Calu3 (cell line): ENCODE measurements at regions of chr5 and their contacts with region 1.

Region 1: DNA sequence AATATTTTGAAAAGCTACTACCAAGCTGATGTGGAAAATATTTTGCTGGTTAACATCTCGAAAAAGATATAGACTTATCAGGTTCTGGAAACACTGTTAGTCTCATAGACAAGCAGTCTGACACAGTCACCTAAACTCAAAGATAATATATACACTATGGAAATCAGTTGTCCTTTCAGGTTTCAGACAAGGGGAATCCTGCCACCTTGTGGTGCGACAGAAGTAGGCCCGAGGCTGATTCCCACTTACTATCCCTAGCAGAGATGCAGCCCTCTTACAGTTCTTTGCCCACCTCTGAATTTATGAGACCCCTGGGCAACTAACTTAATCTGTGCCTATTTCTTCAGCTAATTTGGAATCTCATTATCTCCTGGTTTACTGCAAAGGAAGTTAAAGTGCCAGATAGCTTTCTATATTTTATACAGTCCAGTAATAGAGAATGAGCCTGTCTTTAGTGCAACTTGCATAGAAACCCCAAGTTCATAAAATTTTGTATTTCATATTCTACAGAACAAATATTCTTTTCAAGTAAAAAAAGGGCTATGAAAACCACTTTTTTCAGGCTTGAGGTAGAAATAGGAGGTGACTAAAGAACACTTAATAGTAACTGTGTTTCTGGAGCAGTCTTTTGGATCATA is 16.9 kb downstream of the RAD1 start:
- DNase-seq: peak; percentile 65
- H3K4me3 Mint-ChIP-seq: no peak overlapping the region
- H3K27ac Mint-ChIP-seq: no peak overlapping the region
- H3K4me1 Mint-ChIP-seq: no peaks in the 10 kb centered on the region
- H3K27me3 Mint-ChIP-seq: no peaks in the 10 kb centered on the region
- CTCF ChIP-seq: peak; percentile 58

Region 2: GRCh38 chr5:34474573-34475021 is 423.8 kb before region 1 on chr5:
- CTCF ChIA-PET with region 1: interaction called, 7 read pairs
- intact Hi-C with region 1: loop called (anchors 1 kb)
- DNase-seq: peak; percentile 29
- H3K4me3 Mint-ChIP-seq: no peak overlapping the region
- H3K27ac Mint-ChIP-seq: no peak overlapping the region
- H3K4me1 Mint-ChIP-seq: peaks cover 12% of the 10 kb centered on the region
- H3K27me3 Mint-ChIP-seq: no peaks in the 10 kb centered on the region
- CTCF ChIP-seq: peak; percentile 68

Region 3: DNA sequence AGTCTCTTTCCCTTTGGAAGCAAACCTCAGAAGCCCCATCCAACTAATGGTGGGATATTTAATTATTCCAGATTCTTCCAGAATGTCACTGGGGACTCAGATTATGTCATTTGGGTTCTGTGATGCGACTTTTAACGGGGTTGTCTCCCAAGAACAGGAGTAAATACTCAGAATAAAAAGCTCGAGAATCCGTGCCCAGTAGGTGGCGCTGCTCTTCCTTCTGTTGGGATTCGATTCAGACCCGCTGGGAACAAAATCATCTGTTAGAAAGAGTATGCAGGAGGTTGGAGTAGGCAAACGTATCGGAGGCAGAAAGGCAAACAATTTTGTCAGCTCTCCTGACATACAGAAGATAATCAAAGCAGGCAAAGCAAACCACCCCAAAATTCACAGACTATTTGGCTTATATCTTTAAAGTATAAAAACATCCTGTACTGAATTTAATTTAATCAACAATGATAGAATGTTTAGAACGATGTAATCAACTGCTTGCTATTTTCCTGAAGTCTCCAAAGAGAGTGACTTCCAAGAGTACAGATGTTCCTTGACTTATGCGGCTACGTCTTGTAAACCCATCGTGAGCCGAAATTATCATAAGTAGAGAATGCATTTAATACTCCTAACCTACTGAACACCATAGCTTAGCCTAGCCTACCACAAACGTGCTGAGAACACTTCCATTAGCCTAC is 412.1 kb before region 1 on chr5:
- CTCF ChIA-PET with region 1: interaction called, 3 read pairs
- intact Hi-C with region 1: loop called (anchors 1 kb)
- DNase-seq: peak; percentile 76
- H3K4me3 Mint-ChIP-seq: no peak overlapping the region
- H3K27ac Mint-ChIP-seq: no peak overlapping the region
- H3K4me1 Mint-ChIP-seq: peaks cover 32% of the 10 kb centered on the region
- H3K27me3 Mint-ChIP-seq: no peaks in the 10 kb centered on the region
- CTCF ChIP-seq: peak; percentile 70

Region 4: DNA sequence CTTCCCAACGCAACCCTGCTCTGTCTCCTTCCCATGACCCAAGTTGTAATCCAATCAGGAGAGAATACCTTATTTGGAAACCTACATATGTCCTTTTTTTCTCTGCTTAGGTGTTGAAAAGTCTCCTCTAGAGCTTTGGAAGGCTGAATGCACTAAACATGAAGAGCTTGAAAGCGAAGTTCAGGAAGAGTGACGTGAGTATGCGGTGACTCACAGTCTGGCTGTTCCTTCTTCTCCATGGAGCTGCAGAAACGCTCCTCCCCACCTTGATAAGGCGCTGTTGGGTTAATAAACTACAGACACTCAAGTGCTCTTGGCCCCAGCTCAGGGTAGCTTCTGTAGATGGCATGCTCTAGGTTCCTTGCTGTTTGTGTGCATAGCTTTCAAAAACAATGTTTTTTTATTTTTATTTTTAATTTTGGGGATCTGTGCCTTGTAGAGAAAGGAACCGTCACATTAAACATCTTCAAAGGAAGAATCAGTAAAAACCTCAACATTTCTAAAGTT is 211.6 kb before region 1 on chr5:
- CTCF ChIA-PET with region 1: no interaction called
- intact Hi-C with region 1: loop called (anchors 10 kb)
- DNase-seq: peak; percentile 84
- H3K4me3 Mint-ChIP-seq: peak overlapping the region; percentile 60
- H3K27ac Mint-ChIP-seq: peak overlapping the region; percentile 93
- H3K4me1 Mint-ChIP-seq: peaks cover 67% of the 10 kb centered on the region
- H3K27me3 Mint-ChIP-seq: no peaks in the 10 kb centered on the region
- CTCF ChIP-seq: no peak

Region 5: DNA sequence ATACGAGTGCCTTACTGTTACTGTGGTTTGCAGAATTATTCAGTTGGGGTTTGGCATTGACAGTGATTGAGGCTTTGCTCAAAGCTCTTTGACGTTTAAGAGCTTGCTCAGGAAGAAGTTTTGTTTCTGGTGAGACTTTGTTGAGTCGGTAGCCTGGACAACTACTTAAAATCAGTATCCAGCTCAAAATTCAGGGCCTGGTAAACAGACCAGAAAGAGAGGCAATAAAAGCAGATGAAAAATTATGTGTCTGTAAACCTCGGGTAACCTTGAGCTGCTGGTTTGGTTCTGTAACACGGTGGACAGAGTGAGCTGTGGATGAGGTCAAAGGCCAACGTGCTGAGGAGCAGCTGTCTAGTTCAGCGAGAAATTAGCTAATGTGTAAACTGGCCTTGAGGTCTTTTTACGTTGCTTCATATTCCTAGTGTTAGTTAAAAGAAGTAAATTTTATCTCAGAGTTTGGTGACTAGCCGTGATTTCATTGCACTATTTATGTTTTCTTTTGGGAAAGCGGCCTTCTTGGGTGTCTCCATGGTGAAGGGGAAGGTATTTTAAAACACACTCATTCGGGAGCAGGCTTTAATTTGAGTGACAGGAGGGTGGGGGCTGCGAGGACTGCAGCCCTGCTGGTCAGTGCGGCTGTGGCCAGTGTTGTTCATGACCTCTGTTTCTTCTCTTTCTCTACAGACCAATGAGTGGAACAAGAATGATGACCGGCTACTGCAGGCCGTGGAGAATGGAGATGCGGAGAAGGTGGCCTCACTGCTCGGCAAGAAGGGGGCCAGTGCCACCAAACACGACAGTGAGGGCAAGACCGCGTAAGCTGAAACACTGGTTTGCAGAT is 141.4 kb before region 1 on chr5:
- CTCF ChIA-PET with region 1: no interaction called
- intact Hi-C with region 1: no loop called
- DNase-seq: no peak
- H3K4me3 Mint-ChIP-seq: no peak overlapping the region
- H3K27ac Mint-ChIP-seq: no peak overlapping the region
- H3K4me1 Mint-ChIP-seq: peaks cover 11% of the 10 kb centered on the region
- H3K27me3 Mint-ChIP-seq: no peaks in the 10 kb centered on the region
- CTCF ChIP-seq: no peak

Region 6: GRCh38 chr5:34789021-34789531 is 109.3 kb before region 1 on chr5:
- CTCF ChIA-PET with region 1: no interaction called
- intact Hi-C with region 1: no loop called
- DNase-seq: no peak
- H3K4me3 Mint-ChIP-seq: no peak overlapping the region
- H3K27ac Mint-ChIP-seq: no peak overlapping the region
- H3K4me1 Mint-ChIP-seq: no peaks in the 10 kb centered on the region
- H3K27me3 Mint-ChIP-seq: no peaks in the 10 kb centered on the region
- CTCF ChIP-seq: no peak